Activated T-helper 2 cell treated with anti-CD3 and anti-CD28 coated beads, Interferon-gamma antibody, Interleukin-2, Interleukin-4, amounts not matched to agents 10 μg/mL and 5 μg/mL and 100 μg/mL, durations not matched to agents 14 hours and 24 hours and 36 hours (primary cell): ENCODE measurements at regions of chr14 and their contacts with region 1.

Region 1: DNA sequence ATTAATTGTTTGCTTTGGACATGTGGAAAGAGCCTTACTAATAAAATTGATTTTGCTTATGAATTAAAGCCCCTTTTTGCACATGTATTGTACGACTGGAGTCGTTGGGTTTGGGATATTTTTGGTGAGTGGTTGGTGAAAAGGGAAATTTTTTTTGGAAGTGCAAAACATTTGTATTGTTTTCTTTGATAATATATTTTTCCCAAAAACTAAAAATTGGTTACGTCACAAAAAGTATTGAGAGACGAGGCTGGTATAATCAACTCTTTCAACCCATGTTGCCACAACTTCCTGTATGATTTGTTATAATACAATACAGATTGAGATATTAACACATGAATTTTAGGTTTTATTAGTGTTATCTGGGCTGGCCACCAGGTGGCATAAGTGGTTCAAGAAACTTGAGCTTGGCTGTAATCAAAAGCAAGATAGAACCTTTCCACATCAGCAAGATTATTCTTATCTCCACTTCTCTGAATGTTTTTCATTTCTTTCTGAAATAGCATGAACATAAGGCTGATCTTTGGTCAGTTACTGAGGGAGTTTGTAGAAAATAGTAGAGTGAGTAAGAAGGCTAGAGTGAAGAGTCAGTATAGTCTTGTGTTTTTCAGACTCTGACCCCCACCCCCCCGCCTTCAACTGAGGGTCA is 8.7 kb downstream of the NGDN start:
- DNase-seq: peak; percentile 48
- H3K4me3 Mint-ChIP-seq: no peak overlapping the region
- H3K27ac Mint-ChIP-seq: no peak overlapping the region
- H3K4me1 Mint-ChIP-seq: peaks cover 3% of the 10 kb centered on the region
- H3K27me3 Mint-ChIP-seq: no peaks in the 10 kb centered on the region

Region 2: DNA sequence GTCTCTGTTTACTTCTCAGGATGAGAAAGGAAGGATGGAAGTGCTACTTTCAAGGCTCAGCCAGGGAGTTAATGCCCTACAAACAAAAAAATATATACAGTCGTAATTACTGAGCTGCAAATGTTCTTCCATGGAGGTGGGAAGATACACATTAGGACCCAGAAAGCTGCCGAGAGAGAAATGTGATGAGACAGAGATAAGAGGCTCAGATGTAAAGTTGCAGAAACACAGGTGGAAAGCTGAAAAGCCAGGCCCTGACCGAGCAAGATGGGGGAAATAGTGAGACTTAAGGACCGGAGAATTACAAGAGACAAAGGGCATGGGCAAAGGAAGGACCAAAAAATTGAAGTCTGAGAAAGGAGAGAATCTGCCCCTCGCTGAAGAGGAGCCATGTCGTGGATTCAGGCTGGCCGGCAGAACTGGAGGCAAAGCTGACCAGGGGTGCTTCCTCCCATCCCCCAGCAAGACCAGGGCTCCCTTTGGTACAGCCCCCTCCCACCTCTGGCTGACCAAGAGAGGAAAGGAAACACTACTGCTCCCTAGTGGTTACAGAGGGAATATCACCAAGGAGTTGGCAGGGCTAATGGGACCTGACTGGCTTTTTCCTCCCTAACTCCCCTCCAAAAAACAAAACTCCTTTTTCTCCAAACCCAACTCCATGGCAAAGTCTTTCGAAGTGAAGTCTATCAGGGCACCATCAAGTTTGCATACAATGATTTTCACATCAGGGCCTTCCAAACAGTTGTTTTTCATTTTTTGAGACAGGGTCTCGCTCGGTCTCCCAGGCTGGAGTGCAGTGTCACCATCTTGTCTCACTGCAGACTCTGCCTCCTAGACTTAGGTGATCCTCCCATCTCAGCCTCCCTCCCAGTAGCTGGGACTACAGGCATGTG is 61.3 kb after region 1 on chr14:
- intact Hi-C with region 1: loop called (anchors 1 kb)
- DNase-seq: no peak
- H3K4me3 Mint-ChIP-seq: no peak overlapping the region
- H3K27ac Mint-ChIP-seq: no peak overlapping the region
- H3K4me1 Mint-ChIP-seq: no peaks in the 10 kb centered on the region
- H3K27me3 Mint-ChIP-seq: no peaks in the 10 kb centered on the region

Region 3: GRCh38 chr14:23567192-23568020 is 89.2 kb after region 1 on chr14 and contains the start of gene AP1G2:
- intact Hi-C with region 1: loop called (anchors 1 kb)
- DNase-seq: peak; percentile 86
- H3K4me3 Mint-ChIP-seq: peak within 1 kb of the TSS; percentile 99
- H3K27ac Mint-ChIP-seq: peak within 1 kb of the TSS; percentile 95
- H3K4me1 Mint-ChIP-seq: peaks cover 15% of the 10 kb centered on the region
- H3K27me3 Mint-ChIP-seq: peaks cover 4% of the 10 kb centered on the region
- total RNA-seq, gene AP1G2: 164 and 170 TPM in 2 replicates

Region 4: DNA sequence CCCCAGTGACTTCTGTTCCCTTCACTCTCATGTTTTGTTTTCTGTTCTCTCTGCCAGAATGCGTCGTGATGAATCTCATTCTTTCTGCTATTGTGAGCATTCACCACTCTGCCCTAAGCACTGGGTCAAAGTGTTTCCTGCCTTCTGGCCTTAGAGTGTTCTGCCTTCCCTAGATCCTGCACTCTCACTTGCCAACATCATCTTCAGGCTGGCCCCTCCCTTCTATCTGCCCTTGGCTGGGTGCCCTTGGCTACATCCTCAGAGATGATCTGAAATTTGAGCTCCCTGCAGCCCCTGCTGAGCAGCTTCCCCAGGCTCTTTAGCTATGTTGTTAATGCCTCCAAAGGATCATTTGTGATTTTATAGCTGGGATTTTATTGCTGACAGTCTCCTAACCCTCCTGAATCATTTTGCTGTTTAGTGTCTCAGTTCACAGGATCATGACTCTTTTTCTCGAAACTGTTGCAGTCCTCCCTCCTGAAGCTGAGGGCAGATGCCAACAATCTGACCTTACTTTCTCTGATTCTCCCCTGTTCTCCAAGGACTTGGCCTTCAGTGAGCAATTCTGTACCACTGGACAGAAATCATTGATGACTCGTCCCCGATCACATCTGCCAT is 162.4 kb after region 1 on chr14:
- intact Hi-C with region 1: no loop called
- DNase-seq: no peak
- H3K4me3 Mint-ChIP-seq: no peak overlapping the region
- H3K27ac Mint-ChIP-seq: no peak overlapping the region
- H3K4me1 Mint-ChIP-seq: no peaks in the 10 kb centered on the region
- H3K27me3 Mint-ChIP-seq: no peaks in the 10 kb centered on the region